GM12878 (cell line): ENCODE measurements at regions of chr1 and their contacts with region 1.

Region 1: GRCh38 chr1:119008483-119009311 is 20.6 kb upstream of the TBX15 start:
- DNase-seq: peak; percentile 31
- ATAC-seq: peak; percentile 77
- H3K4me3 ChIP-seq: no peak overlapping the region
- H3K27ac ChIP-seq: no peak overlapping the region
- H3K4me1 ChIP-seq: no peaks in the 10 kb centered on the region
- H3K27me3 ChIP-seq: peaks cover 6 to 10% of the 10 kb centered on the region in 2 experiments
- CTCF ChIP-seq: peak; percentile 43 to 65 (median 53); a peak in 5 of 6 replicates
- EP300 ChIP-seq: no peak
- POLR2A ChIP-seq: no peak
- RAD21 ChIP-seq: peak; percentile 77

Region 2: DNA sequence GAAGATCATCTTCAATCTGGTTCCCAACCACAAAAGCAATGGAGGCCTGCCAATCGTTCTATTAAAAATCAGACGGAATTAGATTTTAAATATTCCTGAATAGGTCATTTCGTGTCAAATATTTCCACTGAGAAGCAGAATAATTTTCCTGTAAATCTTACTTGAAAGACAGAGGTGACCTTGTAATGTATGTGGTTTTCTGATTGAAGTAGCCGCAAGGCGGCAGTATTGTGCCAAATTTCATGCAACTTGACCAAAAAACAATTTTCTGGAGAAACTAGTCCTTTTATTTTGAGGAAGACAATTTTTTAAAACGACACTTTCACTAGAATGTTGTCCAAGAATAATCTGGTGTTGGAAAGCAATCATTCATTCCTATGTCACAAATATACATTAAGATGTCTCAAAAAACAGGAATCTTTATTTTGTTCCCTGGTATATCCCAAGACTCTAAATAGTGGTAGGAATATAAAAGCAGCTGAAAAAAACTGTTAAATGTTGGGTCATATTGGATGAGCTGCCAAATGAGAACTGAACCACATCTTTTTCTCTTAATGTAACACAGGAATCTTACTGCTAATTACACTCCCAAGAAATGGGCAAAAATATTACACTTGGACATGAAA is 857.3 kb before region 1 on chr1:
- CTCF ChIA-PET with region 1: interaction called, 28 read pairs
- POLR2A ChIA-PET with region 1: no interaction called
- RAD21 ChIA-PET with region 1: interaction called, 10 read pairs
- SMC1A ChIA-PET with region 1: interaction called, 9 read pairs
- in situ Hi-C with region 1: loop called (anchors 5 kb)
- intact Hi-C with region 1: loop called (anchors 2 kb)
- DNase-seq: peak; percentile 8
- ATAC-seq: peak; percentile 44; the same call in 2 of the 3 replicates
- H3K4me3 ChIP-seq: no peak overlapping the region
- H3K27ac ChIP-seq: no peak overlapping the region
- H3K4me1 ChIP-seq: no peaks in the 10 kb centered on the region
- H3K27me3 ChIP-seq: no peaks in the 10 kb centered on the region
- CTCF ChIP-seq: peak; percentile 73 to 87 (median 74)
- EP300 ChIP-seq: no peak
- POLR2A ChIP-seq: no peak
- RAD21 ChIP-seq: peak; percentile 76

Region 3: GRCh38 chr1:118223426-118223825 is 785.3 kb before region 1 on chr1:
- CTCF ChIA-PET with region 1: interaction called, 6 read pairs
- POLR2A ChIA-PET with region 1: no interaction called
- RAD21 ChIA-PET with region 1: interaction called, 12 read pairs
- SMC1A ChIA-PET with region 1: interaction called, 5 read pairs
- in situ Hi-C with region 1: no loop called
- intact Hi-C with region 1: no loop called
- DNase-seq: no peak
- ATAC-seq: no peak
- H3K4me3 ChIP-seq: no peak overlapping the region
- H3K27ac ChIP-seq: no peak overlapping the region
- H3K4me1 ChIP-seq: no peaks in the 10 kb centered on the region
- H3K27me3 ChIP-seq: no peaks in the 10 kb centered on the region
- CTCF ChIP-seq: peak; percentile 2 to 17 (median 13); a peak in 2 of 6 replicates
- EP300 ChIP-seq: no peak
- POLR2A ChIP-seq: no peak
- RAD21 ChIP-seq: peak; percentile 46

Region 4: DNA sequence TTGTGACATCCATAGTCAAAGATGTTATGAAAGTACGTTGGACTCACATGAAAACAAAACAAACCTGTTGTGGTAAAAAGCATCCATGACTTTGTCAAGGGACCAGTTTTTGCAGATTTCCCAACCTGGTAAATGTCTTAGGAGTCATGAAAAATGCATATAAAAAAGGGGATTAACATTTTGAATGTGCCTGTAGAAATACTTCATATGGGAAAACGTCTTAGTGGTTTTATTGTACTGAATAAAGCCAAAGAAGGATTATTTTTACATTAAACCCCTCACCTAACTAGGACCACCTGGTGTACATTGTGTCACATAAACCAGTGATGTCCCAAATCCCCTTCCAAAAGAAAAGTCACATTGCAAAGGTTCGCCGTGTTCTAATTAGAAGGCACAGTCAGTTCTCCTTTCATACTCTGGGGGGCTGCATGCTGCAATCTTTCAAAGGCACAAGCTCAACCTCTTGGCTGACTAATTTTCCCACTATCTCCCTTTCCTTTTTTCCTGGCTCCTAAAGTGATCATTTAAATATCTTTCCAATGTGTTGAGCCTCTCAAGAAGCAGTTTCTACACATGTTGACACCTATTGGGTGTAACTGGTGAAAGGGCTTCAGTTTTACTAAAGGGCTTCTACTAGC is 703.9 kb before region 1 on chr1:
- CTCF ChIA-PET with region 1: interaction called, 10 read pairs
- POLR2A ChIA-PET with region 1: no interaction called
- RAD21 ChIA-PET with region 1: interaction called, 11 read pairs
- SMC1A ChIA-PET with region 1: no interaction called
- in situ Hi-C with region 1: no loop called
- intact Hi-C with region 1: no loop called
- DNase-seq: no peak
- ATAC-seq: 0 out of 3 replicates have a peak, but pooled peaks have one; percentile 40
- H3K4me3 ChIP-seq: no peak overlapping the region
- H3K27ac ChIP-seq: no peak overlapping the region
- H3K4me1 ChIP-seq: no peaks in the 10 kb centered on the region
- H3K27me3 ChIP-seq: no peaks in the 10 kb centered on the region
- CTCF ChIP-seq: peak; percentile 43 to 55 (median 53); a peak in 5 of 6 replicates
- EP300 ChIP-seq: no peak
- POLR2A ChIP-seq: no peak
- RAD21 ChIP-seq: peak; percentile 68

Region 5: GRCh38 chr1:118461154-118461553 is 547.5 kb before region 1 on chr1:
- CTCF ChIA-PET with region 1: interaction called, 3 read pairs
- POLR2A ChIA-PET with region 1: no interaction called
- RAD21 ChIA-PET with region 1: no interaction called
- SMC1A ChIA-PET with region 1: interaction called, 6 read pairs
- in situ Hi-C with region 1: no loop called
- intact Hi-C with region 1: loop called (anchors 10 kb)
- DNase-seq: no peak
- ATAC-seq: peak; percentile 63
- H3K4me3 ChIP-seq: no peak overlapping the region
- H3K27ac ChIP-seq: no peak overlapping the region
- H3K4me1 ChIP-seq: no peaks in the 10 kb centered on the region
- H3K27me3 ChIP-seq: no peaks in the 10 kb centered on the region
- CTCF ChIP-seq: peak in 2 of 3 experiments; percentile 14 to 19; a peak in 1 of 6 replicates
- EP300 ChIP-seq: no peak
- POLR2A ChIP-seq: no peak
- RAD21 ChIP-seq: no peak

Region 6: GRCh38 chr1:118918230-118918939 is 90.3 kb before region 1 on chr1:
- CTCF ChIA-PET with region 1: no interaction called
- POLR2A ChIA-PET with region 1: no interaction called
- RAD21 ChIA-PET with region 1: no interaction called
- SMC1A ChIA-PET with region 1: no interaction called
- in situ Hi-C with region 1: no loop called
- intact Hi-C with region 1: loop called (anchors 5 kb)
- DNase-seq: peak; percentile 40
- ATAC-seq: peak; percentile 64
- H3K4me3 ChIP-seq: no peak overlapping the region
- H3K27ac ChIP-seq: no peak overlapping the region; the same call in 1 of the 2 replicates
- H3K4me1 ChIP-seq: peaks cover 2% of the 10 kb centered on the region; the same call in 1 of the 2 replicates
- H3K27me3 ChIP-seq: no peaks in the 10 kb centered on the region
- CTCF ChIP-seq: no peak
- EP300 ChIP-seq: peak; percentile 80; a peak in 2 of 4 replicates
- POLR2A ChIP-seq: no peak
- RAD21 ChIP-seq: no peak

Region 7: GRCh38 chr1:118995312-118996016 is 13.2 kb before region 1 on chr1:
- CTCF ChIA-PET with region 1: interaction called, 10 read pairs
- POLR2A ChIA-PET with region 1: no interaction called
- RAD21 ChIA-PET with region 1: interaction called, 3 read pairs
- SMC1A ChIA-PET with region 1: interaction called, 4 read pairs
- in situ Hi-C with region 1: no loop called
- intact Hi-C with region 1: no loop called
- DNase-seq: no peak
- ATAC-seq: no peak
- H3K4me3 ChIP-seq: no peak overlapping the region
- H3K27ac ChIP-seq: no peak overlapping the region
- H3K4me1 ChIP-seq: no peaks in the 10 kb centered on the region
- H3K27me3 ChIP-seq: peaks cover 10% of the 10 kb centered on the region in 2 experiments
- CTCF ChIP-seq: no peak
- EP300 ChIP-seq: no peak
- POLR2A ChIP-seq: no peak
- RAD21 ChIP-seq: no peak